PC-9 (cell line): ENCODE measurements at regions of chr11 and their contacts with region 1.

Region 1: GRCh38 chr11:117817368-117818040 is 7.0 kb downstream of the FXYD2 start:
- DNase-seq: peak; percentile 54 to 70
- H3K4me3 ChIP-seq: no peak overlapping the region
- H3K27ac ChIP-seq: no peak overlapping the region
- H3K4me1 ChIP-seq: 0 out of 2 replicates have a peak, but pooled peaks cover 6% of the 10 kb centered on the region
- H3K27me3 ChIP-seq: no peaks in the 10 kb centered on the region
- CTCF ChIP-seq: peak; percentile 99

Region 2: GRCh38 chr11:117426269-117426685 is 391.2 kb before region 1 on chr11:
- CTCF ChIA-PET with region 1: interaction called, 22 read pairs
- POLR2A ChIA-PET with region 1: no interaction called
- intact Hi-C with region 1: loop called (anchors 1 kb)
- DNase-seq: peak in 1 of 2 experiments; percentile 60
- H3K4me3 ChIP-seq: no peak overlapping the region
- H3K27ac ChIP-seq: no peak overlapping the region
- H3K4me1 ChIP-seq: no peaks in the 10 kb centered on the region
- H3K27me3 ChIP-seq: peaks cover 91% of the 10 kb centered on the region
- CTCF ChIP-seq: peak; percentile 100

Region 3: GRCh38 chr11:117443266-117444195 is 374.0 kb before region 1 on chr11:
- CTCF ChIA-PET with region 1: no interaction called
- POLR2A ChIA-PET with region 1: no interaction called
- intact Hi-C with region 1: loop called (anchors 2 kb)
- DNase-seq: peak in 1 of 2 experiments; percentile 28
- H3K4me3 ChIP-seq: no peak overlapping the region
- H3K27ac ChIP-seq: no peak overlapping the region
- H3K4me1 ChIP-seq: no peaks in the 10 kb centered on the region
- H3K27me3 ChIP-seq: peaks cover 97% of the 10 kb centered on the region
- CTCF ChIP-seq: peak; percentile 52

Region 4: DNA sequence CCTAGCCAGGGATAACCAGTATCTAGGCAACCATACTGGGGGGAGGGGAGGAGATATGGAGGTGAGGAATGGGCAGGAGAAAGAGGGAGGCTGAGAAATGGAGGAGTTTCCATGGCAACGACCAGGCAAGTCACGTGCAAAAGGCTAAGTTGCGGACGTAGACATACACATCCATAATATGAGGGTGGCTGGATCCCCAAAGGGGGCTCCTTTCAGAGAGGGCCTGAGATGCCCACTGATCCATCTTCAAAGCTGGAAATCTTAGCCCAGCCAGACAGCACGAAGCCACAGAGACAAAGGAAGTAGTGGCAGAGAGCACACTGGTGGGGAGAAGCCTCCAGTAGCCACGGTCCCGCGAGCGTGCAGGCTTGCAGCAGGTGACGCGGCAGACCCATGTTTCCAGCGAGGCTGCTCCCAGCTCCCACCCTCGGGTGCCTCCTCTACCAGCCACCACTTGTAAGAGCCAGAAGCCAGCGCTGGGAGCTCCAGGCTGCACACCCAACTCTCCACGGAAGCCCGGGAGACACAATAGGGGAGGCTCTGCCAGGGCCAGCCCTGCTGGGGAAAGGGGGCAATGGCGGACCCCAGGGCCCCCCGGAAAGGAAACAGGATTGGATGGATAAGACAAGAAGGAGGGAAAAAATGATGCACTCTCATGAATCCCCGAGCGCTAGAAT is 58.0 kb after region 1 on chr11:
- CTCF ChIA-PET with region 1: interaction called, 12 read pairs
- POLR2A ChIA-PET with region 1: no interaction called
- intact Hi-C with region 1: no loop called
- DNase-seq: no peak
- H3K4me3 ChIP-seq: no peak overlapping the region
- H3K27ac ChIP-seq: no peak overlapping the region
- H3K4me1 ChIP-seq: no peaks in the 10 kb centered on the region
- H3K27me3 ChIP-seq: peaks cover 98% of the 10 kb centered on the region
- CTCF ChIP-seq: no peak

Region 5: GRCh38 chr11:118051611-118052461 is 234.3 kb after region 1 on chr11:
- CTCF ChIA-PET with region 1: no interaction called
- POLR2A ChIA-PET with region 1: no interaction called
- intact Hi-C with region 1: loop called (anchors 1 kb)
- DNase-seq: no peak
- H3K4me3 ChIP-seq: no peak overlapping the region
- H3K27ac ChIP-seq: no peak overlapping the region
- H3K4me1 ChIP-seq: peaks cover 2% of the 10 kb centered on the region; the same call in 1 of the 2 replicates
- H3K27me3 ChIP-seq: peaks cover 16% of the 10 kb centered on the region
- CTCF ChIP-seq: no peak

Region 6: GRCh38 chr11:118565051-118565450 is 747.5 kb after region 1 on chr11:
- CTCF ChIA-PET with region 1: no interaction called
- POLR2A ChIA-PET with region 1: no interaction called
- intact Hi-C with region 1: loop called (anchors 10 kb)
- DNase-seq: peak in 1 of 2 experiments; percentile 16
- H3K4me3 ChIP-seq: no peak overlapping the region
- H3K27ac ChIP-seq: no peak overlapping the region
- H3K4me1 ChIP-seq: 0 out of 2 replicates have a peak, but pooled peaks cover 10% of the 10 kb centered on the region
- H3K27me3 ChIP-seq: no peaks in the 10 kb centered on the region
- CTCF ChIP-seq: no peak